AG04449 (cell line): ENCODE measurements at regions of chr2 and their contacts with region 1.

Region 1: GRCh38 chr2:16756831-16757644 is 91.4 kb upstream of the CYRIA start:
- DNase-seq: peak; percentile 5
- H3K4me3 ChIP-seq: no peak overlapping the region
- CTCF ChIP-seq: peak; percentile 83

Region 2: DNA sequence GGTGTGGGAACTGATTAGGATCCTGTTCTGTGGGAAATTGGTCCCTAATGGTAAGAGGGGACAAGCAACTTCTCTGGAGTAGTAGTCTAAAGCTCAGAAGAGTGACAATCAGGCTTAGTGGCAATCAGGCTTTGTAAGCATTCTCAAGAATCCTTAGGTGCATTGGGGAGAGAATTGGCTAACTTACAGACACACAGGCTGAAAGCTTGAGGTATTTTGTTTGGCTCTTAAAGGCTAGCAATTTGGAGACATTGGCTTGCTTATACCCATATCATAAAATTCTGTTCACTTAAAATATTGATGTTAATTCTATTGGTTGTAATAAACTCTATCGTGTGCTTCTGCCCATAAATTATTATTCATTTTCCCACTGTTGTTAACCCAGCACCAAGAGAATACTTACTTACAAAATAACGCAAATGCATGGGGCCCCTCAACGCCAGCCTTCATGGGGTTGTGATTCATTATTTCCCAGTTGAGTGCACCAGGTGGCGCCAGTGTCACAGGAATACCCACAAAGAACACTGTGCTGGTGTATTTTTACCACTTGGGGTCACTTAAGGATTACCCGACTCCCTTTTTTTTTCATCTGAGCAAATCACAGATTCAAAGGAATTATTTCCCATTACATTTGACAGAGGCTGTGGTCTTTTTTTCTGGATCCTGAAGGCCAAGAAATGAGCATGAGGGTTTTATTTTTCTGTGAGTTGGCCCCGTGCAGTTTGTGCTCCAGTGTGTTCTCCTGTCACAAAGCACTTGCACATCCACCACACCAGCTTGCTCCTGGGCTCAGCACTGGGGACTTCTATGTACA is 1119.9 kb before region 1 on chr2:
- CTCF ChIA-PET with region 1: interaction called, 37 read pairs
- POLR2A ChIA-PET with region 1: no interaction called
- DNase-seq: peak; percentile 29
- H3K4me3 ChIP-seq: no peak overlapping the region
- CTCF ChIP-seq: peak; percentile 81

Region 3: GRCh38 chr2:16537347-16537746 is 219.7 kb before region 1 on chr2:
- CTCF ChIA-PET with region 1: no interaction called
- POLR2A ChIA-PET with region 1: no interaction called
- DNase-seq: no peak
- H3K4me3 ChIP-seq: no peak overlapping the region
- CTCF ChIP-seq: no peak

Region 4: GRCh38 chr2:16608661-16609643 is 148.1 kb before region 1 on chr2:
- CTCF ChIA-PET with region 1: interaction called, 41 read pairs
- POLR2A ChIA-PET with region 1: no interaction called
- DNase-seq: no peak
- H3K4me3 ChIP-seq: peak overlapping the region; percentile 57
- CTCF ChIP-seq: peak; percentile 88

Region 5: DNA sequence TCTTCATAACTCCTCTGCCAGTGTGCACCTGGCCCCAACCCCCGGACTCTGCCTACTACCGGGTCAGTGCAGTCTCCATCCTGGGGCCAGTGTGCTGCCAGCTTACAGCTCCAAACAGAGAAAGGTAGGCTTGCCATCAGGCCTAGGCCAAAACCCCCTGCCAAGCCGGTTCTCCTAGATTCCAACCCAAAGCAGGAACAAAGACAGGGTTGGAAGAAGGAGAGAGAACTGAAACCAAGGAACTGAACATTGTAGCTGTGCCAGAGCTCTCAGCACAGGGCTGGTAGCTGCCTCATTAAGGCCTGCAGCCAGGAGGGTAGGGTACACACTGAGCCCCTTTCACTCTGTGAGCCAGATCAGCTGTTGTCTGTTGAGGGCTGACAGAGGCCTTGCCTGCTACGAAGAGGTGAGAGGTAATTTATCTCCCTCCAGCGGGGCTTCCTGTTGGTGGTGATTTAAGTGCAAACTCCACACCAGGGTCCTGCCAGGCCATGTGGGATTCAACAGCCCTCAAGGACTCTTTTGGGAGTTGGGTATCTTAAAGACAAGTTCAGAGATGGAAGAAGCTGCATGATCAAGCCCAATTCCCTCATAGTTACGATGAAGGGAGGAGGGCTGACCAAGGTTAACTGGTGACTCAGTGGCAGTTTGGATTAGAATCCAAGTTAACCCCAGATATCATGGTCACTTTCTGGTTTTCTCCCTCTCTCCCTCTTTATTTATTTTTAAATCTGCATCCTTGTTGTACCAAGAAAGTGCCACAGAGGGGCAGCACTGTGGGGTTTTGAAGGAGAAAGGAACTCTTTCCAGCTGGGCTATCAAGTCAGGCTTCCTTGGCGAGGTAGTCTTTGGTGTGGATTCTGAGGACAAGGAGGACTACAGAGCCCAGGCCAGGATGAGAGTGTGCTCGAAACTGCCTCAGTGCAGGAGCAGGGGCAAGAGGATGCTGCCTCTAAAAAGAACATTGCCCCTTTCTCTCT is 139.5 kb before region 1 on chr2:
- CTCF ChIA-PET with region 1: interaction called, 41 read pairs
- POLR2A ChIA-PET with region 1: no interaction called
- DNase-seq: no peak
- H3K4me3 ChIP-seq: no peak overlapping the region
- CTCF ChIP-seq: peak; percentile 26

Region 6: GRCh38 chr2:16623031-16623430 is 134.0 kb before region 1 on chr2:
- CTCF ChIA-PET with region 1: interaction called, 27 read pairs
- POLR2A ChIA-PET with region 1: no interaction called
- DNase-seq: no peak
- H3K4me3 ChIP-seq: no peak overlapping the region
- CTCF ChIP-seq: no peak

Region 7: GRCh38 chr2:16773080-16773713 is 16.2 kb after region 1 on chr2:
- CTCF ChIA-PET with region 1: interaction called, 16 read pairs
- POLR2A ChIA-PET with region 1: no interaction called
- DNase-seq: no peak
- H3K4me3 ChIP-seq: no peak overlapping the region
- CTCF ChIP-seq: peak; percentile 51